ENCODE measurements at regions of chr17 and their contacts with region 1.

Region 1: GRCh38 chr17:73429440-73430164 is 117.8 kb upstream of the CDC42EP4 start:
- DNase-seq: peak; percentile 69
- H3K4me3 Mint-ChIP-seq: no peak overlapping the region
- H3K27ac Mint-ChIP-seq: no peak overlapping the region
- H3K4me1 Mint-ChIP-seq: peaks cover 16% of the 10 kb centered on the region
- H3K27me3 Mint-ChIP-seq: peaks cover 3% of the 10 kb centered on the region

Region 2: GRCh38 chr17:73342050-73342522 is 87.5 kb before region 1 on chr17:
- intact Hi-C with region 1: no loop called
- DNase-seq: no peak
- H3K4me3 Mint-ChIP-seq: no peak overlapping the region
- H3K27ac Mint-ChIP-seq: no peak overlapping the region
- H3K4me1 Mint-ChIP-seq: no peaks in the 10 kb centered on the region
- H3K27me3 Mint-ChIP-seq: peaks cover 6% of the 10 kb centered on the region

Region 3: GRCh38 chr17:73956669-73957465 is 527.3 kb after region 1 on chr17:
- intact Hi-C with region 1: loop called (anchors 1 kb)
- DNase-seq: peak; percentile 6
- H3K4me3 Mint-ChIP-seq: no peak overlapping the region
- H3K27ac Mint-ChIP-seq: no peak overlapping the region
- H3K4me1 Mint-ChIP-seq: no peaks in the 10 kb centered on the region
- H3K27me3 Mint-ChIP-seq: peaks cover 5% of the 10 kb centered on the region

Measured in activated T-helper 1 cell treated with anti-CD3 and anti-CD28 coated beads, Interleukin-12 subunit alpha, Interleukin-12 subunit beta, Interleukin-2, Interleukin-4 antibody, amounts not matched to agents 30 ng/mL and 10 ng/mL and 1 ng/mL, durations not matched to agents 14 hours and 24 hours and 36 hours (primary cell).